ENCODE measurements at regions of chr4 and their contacts with region 1.

Region 1: DNA sequence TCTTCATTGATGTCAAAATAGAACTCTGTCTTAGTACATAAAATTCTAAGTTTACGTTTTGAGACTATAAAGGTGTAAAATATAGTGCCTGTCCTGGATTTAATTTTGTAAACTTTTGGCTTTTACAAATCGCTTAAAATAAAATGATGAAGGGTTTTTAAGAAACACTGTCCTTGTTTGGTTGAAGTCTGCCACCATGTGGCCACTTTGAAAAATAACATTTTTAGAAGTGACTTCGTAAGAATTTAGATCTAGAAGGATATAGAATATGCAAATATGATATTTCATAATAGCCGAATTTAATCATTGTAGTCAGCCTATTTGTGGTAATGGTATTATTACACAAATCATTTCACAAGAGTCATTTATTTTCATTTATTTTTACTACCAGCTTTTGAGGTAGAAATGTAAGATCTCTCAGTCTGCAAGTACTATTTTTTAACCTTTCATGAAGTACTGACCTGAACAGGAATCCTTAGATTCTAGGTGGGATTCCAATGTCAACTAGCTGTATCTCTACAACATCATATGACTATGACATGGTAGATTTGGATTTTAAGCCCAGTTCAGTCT is 31.0 kb upstream of the FAT4 start:
- H3K4me3 Mint-ChIP-seq: no peak overlapping the region
- H3K27ac Mint-ChIP-seq: no peak overlapping the region
- H3K4me1 Mint-ChIP-seq: no peaks in the 10 kb centered on the region
- H3K27me3 Mint-ChIP-seq: no peaks in the 10 kb centered on the region

Region 2: GRCh38 chr4:124334119-124334518 is 949.7 kb before region 1 on chr4:
- intact Hi-C with region 1: loop called (anchors 2 kb)
- H3K4me3 Mint-ChIP-seq: no peak overlapping the region
- H3K27ac Mint-ChIP-seq: no peak overlapping the region
- H3K4me1 Mint-ChIP-seq: no peaks in the 10 kb centered on the region
- H3K27me3 Mint-ChIP-seq: no peaks in the 10 kb centered on the region

Region 3: DNA sequence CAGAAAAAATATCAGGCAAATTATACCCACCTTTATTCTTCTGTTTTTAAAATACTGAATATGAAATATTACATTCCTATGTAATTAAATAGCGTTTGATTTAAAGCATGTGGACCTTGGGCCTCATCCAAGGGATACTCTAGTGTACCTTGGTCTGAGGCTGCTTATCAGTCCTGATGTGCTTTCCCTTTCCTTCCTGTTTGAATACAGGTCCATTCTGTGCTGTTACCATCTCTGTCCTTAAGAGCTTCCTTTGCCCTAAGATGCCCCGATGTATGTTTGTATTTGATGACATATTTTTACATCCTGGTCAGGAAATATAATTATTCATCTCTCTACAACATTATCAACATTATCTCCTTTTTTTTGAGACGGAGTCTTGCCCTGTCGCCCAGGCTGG is 55.0 kb after region 1 on chr4:
- intact Hi-C with region 1: no loop called
- H3K4me3 Mint-ChIP-seq: no peak overlapping the region
- H3K27ac Mint-ChIP-seq: no peak overlapping the region
- H3K4me1 Mint-ChIP-seq: no peaks in the 10 kb centered on the region
- H3K27me3 Mint-ChIP-seq: no peaks in the 10 kb centered on the region

Measured in dendritic cell treated with granulocyte-macrophage colony-stimulating factor and Interleukin-4, amounts not matched to agents 40 ng/mL and 50 ng/mL, for 4 days (primary cell).